ENCODE measurements at regions of chr9 and their contacts with region 1.

Region 1: DNA sequence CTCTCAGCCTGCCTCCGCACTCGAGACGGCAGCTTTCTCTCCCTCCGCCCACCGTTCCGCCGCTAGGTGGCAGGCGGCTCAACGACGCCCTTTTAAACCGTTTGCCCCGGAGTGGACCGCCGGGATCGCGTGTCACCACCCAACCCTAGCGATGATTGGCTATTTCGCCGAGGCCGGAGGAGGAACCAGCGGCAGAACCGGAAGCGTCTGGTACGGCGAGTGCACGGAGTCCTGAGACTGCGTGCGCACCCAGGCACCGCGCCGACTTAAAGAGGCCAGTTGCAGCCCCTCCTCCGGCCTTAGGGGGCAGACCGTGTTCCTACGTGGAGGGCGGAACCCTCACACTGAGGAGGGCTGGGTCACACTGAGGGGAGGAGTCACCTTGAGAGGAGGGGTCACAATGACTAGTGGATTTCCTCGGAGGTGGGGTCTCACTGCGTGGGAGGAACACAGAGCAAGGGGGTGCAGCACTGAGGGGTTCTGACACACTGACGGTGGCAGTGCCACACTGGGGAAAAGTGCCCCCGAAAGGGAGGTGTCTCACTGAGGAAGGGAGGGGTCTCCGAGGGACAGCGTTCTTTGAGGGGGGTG is 980 bp upstream of the TESK1 start:
- DNase-seq: peak; percentile 99
- H3K4me3 Mint-ChIP-seq: peak overlapping the region; percentile 91
- H3K27ac Mint-ChIP-seq: peak overlapping the region; percentile 99
- H3K4me1 Mint-ChIP-seq: peaks cover 34% of the 10 kb centered on the region
- H3K27me3 Mint-ChIP-seq: peaks cover 2% of the 10 kb centered on the region

Region 2: DNA sequence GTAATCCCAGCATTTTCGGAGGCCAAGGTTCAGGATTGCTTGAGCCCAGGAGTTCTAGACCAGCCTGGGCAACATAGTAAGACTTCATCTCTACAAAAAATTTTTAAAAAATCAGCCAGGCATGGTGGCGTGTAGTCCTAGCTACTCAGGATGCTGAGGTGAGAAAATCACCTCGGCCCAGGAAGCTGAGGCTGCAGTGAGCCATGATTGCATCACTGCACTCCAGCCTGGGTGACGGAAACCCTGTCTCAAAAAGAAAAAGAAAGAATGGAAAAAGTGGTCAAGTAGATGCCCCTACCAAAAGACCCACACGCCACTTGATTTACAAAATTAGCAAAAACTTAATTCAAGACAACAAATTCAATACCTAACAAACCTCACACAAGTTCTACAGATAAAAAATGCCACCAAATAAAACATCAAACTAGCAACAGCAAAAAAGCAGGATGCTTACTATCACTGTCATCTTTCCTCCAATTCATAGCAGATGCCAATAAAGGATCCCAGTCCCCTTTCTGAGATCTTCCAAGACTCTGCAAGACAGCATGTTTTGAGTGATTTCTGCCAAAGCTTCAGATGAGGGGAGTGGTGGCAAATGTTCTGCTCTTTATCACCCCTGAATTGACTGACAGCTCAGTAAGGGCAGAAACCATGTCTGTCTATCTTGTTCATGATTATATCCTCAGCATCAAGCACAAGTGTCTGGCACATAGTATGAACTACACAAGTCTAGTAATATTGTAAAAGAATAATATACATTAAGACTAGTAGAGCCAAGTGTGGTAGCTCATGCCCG is 33.2 kb before region 1 on chr9:
- intact Hi-C with region 1: loop called (anchors 1 kb)
- DNase-seq: peak; percentile 40
- H3K4me3 Mint-ChIP-seq: peak overlapping the region; percentile 28
- H3K27ac Mint-ChIP-seq: peak overlapping the region; percentile 87
- H3K4me1 Mint-ChIP-seq: peaks cover 39% of the 10 kb centered on the region
- H3K27me3 Mint-ChIP-seq: peaks cover 2% of the 10 kb centered on the region

Region 3: DNA sequence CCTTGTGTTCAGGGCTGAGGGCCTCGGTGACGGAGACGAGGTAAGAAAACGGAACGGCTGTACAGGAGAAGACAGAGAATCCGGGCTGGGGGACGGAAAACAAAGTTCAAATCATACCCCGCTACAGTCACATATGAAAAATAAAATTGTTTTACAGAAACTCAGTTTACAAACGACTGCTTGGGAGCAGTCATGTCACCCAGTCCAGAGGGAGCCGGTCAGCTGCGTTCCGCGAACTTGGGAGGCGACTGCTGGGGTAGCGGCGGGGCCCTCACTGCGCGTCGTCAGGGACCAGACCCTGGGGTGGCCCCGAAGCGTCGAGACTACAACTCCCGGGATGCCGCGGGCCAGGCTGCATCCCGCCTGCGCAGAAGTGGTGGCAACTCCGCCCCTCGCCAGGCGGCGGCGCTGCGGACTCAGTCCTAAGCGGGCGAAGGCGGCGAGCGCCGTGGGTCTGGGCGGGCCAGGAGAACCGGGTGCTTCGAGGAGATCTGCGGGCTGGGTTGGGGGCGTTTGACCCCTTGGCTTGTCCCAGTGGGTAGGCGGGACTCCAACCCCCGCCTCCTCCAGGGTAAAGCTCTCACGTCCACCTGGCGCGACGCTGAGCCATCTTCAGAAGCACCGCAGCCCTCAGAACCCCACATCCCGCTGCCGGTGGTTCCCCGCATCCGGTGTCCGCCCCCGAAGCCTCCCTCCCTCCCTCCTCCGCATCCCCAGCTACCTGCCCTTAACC is 42.6 kb after region 1 on chr9:
- intact Hi-C with region 1: loop called (anchors 1 kb)
- DNase-seq: peak; percentile 91
- H3K4me3 Mint-ChIP-seq: peak overlapping the region; percentile 92
- H3K27ac Mint-ChIP-seq: peak overlapping the region; percentile 93
- H3K4me1 Mint-ChIP-seq: peaks cover 49% of the 10 kb centered on the region
- H3K27me3 Mint-ChIP-seq: peaks cover 1% of the 10 kb centered on the region

Region 4: GRCh38 chr9:35690431-35691333 is 86.6 kb after region 1 on chr9:
- intact Hi-C with region 1: loop called (anchors 2 kb)
- DNase-seq: peak; percentile 9
- H3K4me3 Mint-ChIP-seq: peak overlapping the region; percentile 84
- H3K27ac Mint-ChIP-seq: peak overlapping the region; percentile 55
- H3K4me1 Mint-ChIP-seq: peaks cover 26% of the 10 kb centered on the region
- H3K27me3 Mint-ChIP-seq: peaks cover 2% of the 10 kb centered on the region

Region 5: DNA sequence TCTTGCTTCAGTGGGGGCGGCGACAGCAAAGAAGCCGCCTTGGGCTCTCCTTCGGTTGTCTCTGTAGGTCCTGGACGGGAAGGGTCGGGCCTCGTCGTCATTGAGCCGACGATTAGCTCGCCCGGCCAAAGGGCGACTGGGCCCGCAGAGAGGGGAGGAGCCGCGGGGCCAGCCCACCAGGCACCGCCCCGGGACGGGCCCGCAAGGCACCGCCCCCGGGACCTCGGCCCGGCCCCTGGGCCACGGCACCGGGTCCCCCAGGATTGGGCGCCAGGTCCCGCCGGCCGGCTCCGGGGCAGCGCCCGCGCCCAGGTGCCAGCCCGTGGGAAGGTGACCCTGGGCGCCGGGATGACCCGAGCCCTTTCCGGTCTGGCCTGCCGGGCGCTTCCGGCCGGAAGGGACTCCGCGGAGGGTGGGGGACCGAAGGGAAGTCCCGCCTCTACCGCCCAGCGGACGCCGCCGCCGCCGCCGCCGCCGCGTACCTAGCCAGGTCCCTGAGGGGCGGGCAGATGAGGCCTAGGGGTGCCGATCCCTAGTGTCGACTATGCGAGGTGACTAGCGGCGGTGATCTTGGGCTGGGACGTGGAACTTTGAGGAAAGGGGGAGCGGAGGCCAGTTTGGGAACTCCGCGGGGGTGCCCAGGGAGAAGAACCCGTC is 144.9 kb after region 1 on chr9 and contains the starts of genes GBA2 and RGP1:
- intact Hi-C with region 1: loop called (anchors 1 kb)
- DNase-seq: peak; percentile 69
- H3K4me3 Mint-ChIP-seq: peak within 1 kb of the TSS; percentile 95
- H3K27ac Mint-ChIP-seq: peak within 1 kb of the TSS; percentile 73
- H3K4me1 Mint-ChIP-seq: peaks cover 40% of the 10 kb centered on the region
- H3K27me3 Mint-ChIP-seq: no peaks in the 10 kb centered on the region
- total RNA-seq, gene GBA2: 54.7 and 58.4 TPM in 2 replicates
- total RNA-seq, gene RGP1: 18.4 and 18.9 TPM in 2 replicates

Measured in activated T-helper 1 cell treated with anti-CD3 and anti-CD28 coated beads, Interleukin-12 subunit alpha, Interleukin-12 subunit beta, Interleukin-2, Interleukin-4 antibody, amounts not matched to agents 30 ng/mL and 10 ng/mL and 1 ng/mL, durations not matched to agents 14 hours and 24 hours and 36 hours (primary cell).